Dorsolateral prefrontal cortex (tissue), 120 donors: ENCODE measurements at regions of chrX and their contacts with region 1.

Region 1: DNA sequence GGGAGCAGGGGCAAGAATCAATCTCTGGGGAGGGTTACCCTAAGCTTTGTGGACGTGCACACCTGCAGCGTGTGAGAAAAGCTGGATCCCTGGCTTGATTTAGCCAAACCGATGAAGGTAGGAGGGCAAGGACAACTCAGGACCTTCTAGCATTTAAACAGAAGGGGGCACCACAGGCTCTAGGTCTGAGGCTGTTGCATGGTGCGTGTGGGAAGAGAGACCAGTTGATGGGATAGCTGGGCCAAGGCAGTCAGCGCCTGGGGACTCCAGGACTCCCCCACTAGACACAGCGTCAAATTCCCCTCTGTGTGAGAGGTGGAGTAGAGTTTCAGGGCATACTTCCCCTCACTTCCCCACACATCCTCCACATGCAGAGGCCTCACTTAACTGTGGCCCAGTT is 4.3 kb downstream of the GABRQ start:
- DNase-seq: peak in 3 of 10 donors; percentile 33 to 52 (median 41)
- H3K4me3 ChIP-seq: no peak overlapping the region
- H3K27ac ChIP-seq: peak overlapping the region in 13 of 59 donors; percentile 43 to 85 (median 77)
- H3K27me3 ChIP-seq: peaks cover 0 to 67% (median 32%) of the 10 kb centered on the region in 45 donors
- CTCF ChIP-seq: peak in 51 of 56 donors; percentile 14 to 65 (median 39)

Region 2: DNA sequence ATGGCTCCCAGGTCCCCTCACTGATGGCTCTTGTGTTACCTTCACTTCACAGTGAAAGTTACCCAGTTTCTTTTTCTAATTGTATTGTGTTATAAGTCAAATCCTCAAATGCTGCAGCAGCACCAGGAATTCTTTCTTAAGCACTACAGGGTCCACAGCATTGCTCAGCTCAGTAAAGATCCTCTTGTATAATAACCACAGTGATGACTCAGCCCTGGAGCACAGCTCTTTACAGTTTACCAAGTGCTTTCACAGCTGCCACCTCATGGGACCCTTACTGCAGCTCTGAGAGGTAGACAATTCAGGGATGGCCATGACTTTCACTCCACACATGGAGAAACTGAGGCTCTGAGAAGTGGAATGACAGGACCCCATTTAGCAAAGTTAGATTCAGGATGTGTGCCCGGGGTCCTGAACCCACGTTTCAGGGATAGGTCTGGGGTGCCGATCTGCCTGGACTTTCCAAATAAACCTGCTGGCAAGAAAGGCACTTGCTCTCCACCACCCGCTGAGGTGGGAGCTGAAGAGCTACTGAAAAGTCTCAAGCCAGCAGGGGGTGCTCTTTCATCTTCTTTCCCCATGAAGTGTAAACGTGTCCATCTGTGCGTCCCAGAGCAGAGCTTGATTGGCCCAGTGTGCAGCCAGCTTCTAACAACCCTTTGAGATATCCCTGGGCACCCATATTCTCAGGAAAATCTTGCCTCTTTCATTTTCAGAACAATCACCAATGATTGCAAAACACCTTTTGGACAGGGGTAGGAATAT is 40.0 kb before region 1 on chrX:
- intact Hi-C with region 1: no loop called
- DNase-seq: peak in 2 of 10 donors; percentile 4 to 16
- H3K4me3 ChIP-seq: no peak overlapping the region
- H3K27ac ChIP-seq: peak overlapping the region in 26 of 59 donors; percentile 16 to 79 (median 52)
- H3K27me3 ChIP-seq: peaks cover 0 to 54% (median 15%) of the 10 kb centered on the region in 45 donors
- CTCF ChIP-seq: peak in 1 of 56 donors; percentile 8

Region 3: DNA sequence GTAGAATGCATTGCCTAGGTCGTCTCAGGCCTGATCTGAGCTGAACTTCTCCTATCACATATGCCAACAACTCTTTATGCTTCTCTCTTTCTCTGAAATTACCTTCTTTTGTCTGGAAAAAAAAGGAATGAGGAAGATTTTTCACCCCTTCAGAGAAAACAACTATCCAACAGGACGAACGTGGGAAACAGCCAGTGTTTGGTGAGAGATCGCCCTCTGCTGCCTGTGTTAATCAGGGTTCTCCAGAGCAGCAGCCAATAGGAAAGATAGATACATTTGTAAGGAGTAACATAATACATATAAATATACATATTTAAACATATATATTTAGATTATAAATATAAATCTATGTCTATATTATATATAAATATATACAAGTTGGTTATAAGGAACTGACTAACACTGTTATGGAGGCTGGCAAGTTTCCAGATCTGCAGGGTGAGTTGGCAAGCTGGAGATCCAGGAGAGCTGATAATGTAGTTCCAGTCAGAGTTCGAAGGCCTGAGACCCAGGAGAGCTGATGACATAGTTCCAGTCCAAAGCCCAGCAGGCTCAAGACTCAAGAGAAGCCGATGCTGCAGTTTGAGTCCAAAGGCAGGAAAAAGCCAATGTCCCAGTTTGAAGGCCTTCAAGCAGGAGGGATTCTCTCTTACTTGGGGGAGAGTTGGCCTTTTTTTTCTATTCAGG is 175.2 kb after region 1 on chrX:
- intact Hi-C with region 1: loop called (anchors 2 kb)
- DNase-seq: peak in 5 of 10 donors; percentile 21 to 61 (median 53)
- H3K4me3 ChIP-seq: no peak overlapping the region
- H3K27ac ChIP-seq: no peak overlapping the region
- H3K27me3 ChIP-seq: peaks cover 0 to 69% (median 9%) of the 10 kb centered on the region in 45 donors
- CTCF ChIP-seq: peak in 51 of 56 donors; percentile 27 to 71 (median 53)

Region 4: DNA sequence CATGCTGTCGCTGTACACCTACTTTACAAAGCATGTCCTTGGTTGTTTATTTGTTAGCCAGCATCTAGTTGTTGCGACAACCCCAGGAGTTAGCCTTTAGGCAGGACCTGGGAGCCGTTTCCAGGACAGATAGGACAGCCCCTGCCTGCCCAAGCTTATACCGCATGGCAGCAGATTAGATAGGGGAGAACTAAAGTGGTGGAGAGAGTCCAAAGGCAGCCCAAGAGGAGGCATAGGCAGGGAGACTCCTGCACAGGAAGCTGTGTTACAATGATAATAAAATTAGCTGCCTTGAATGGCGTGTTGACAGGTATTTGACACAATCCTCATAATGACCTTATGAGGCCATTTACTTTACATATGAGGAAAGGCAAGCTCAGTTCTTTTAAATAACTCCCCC is 201.9 kb after region 1 on chrX:
- intact Hi-C with region 1: no loop called
- DNase-seq: no peak
- H3K4me3 ChIP-seq: no peak overlapping the region
- H3K27ac ChIP-seq: no peak overlapping the region
- H3K27me3 ChIP-seq: peaks cover 0 to 60% (median 6%) of the 10 kb centered on the region in 45 donors
- CTCF ChIP-seq: no peak

Region 5: GRCh38 chrX:152926279-152926678 is 284.3 kb after region 1 on chrX:
- intact Hi-C with region 1: loop called in 1 of 2 experiments (anchors 10 kb)
- DNase-seq: peak in 6 of 10 donors; percentile 56 to 82 (median 64)
- H3K4me3 ChIP-seq: peak overlapping the region in 7 of 59 donors; percentile 7 to 43 (median 16)
- H3K27ac ChIP-seq: peak overlapping the region in 46 of 59 donors; percentile 8 to 90 (median 68)
- H3K27me3 ChIP-seq: peaks cover 0 to 64% (median 12%) of the 10 kb centered on the region in 45 donors
- CTCF ChIP-seq: peak in 55 of 56 donors; percentile 17 to 64 (median 50)